Ascending aorta (tissue), 2 donors: ENCODE measurements at regions of chr5 and their contacts with region 1.

Region 1: GRCh38 chr5:80255732-80256479 is at the start of gene SERINC5:
- DNase-seq: peak; percentile 41 to 92
- H3K4me3 ChIP-seq: peak within 1 kb of the TSS; percentile 77 to 84
- H3K27ac ChIP-seq: peak within 1 kb of the TSS; percentile 93 to 96
- H3K4me1 ChIP-seq: peaks cover 0 to 5% of the 10 kb centered on the region in 2 donors
- H3K27me3 ChIP-seq: no peaks in the 10 kb centered on the region
- CTCF ChIP-seq: no peak
- total RNA-seq, gene SERINC5: 3.4 TPM

Region 2: DNA sequence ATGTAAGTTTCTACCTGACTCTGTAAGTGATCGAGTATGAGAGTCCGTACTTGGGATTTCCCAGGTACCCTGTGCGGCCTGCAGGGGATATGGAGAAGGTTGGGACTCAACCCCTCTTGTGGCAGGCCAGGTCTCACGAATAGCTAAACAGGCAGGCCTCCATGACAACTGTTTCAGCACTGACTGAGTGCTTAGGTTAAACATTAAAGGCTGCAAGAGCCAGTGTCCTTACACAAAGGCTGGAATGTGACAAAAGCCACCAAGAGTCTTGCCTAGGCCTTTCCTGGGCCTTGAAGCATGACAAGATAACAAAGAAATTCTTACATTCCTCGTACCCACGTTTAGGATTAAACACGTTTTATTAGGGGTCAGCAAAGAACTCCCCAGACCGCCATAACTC is 162.1 kb before region 1 on chr5:
- intact Hi-C with region 1: loop called (anchors 5 kb)
- DNase-seq: no peak
- H3K4me3 ChIP-seq: no peak overlapping the region
- H3K27ac ChIP-seq: no peak overlapping the region
- H3K4me1 ChIP-seq: no peaks in the 10 kb centered on the region
- H3K27me3 ChIP-seq: no peaks in the 10 kb centered on the region
- CTCF ChIP-seq: no peak

Region 3: GRCh38 chr5:80191991-80192398 is 63.9 kb before region 1 on chr5:
- intact Hi-C with region 1: loop called (anchors 5 kb)
- DNase-seq: no peak
- H3K4me3 ChIP-seq: no peak overlapping the region
- H3K27ac ChIP-seq: peak overlapping the region; percentile 4 to 54
- H3K4me1 ChIP-seq: peaks cover 0 to 18% of the 10 kb centered on the region in 2 donors
- H3K27me3 ChIP-seq: no peaks in the 10 kb centered on the region
- CTCF ChIP-seq: no peak

Region 4: GRCh38 chr5:80216753-80217596 is 38.9 kb before region 1 on chr5:
- intact Hi-C with region 1: loop called (anchors 2 kb)
- DNase-seq: peak; percentile 55 to 92
- H3K4me3 ChIP-seq: peak overlapping the region in 1 of 2 donors; percentile 34
- H3K27ac ChIP-seq: peak overlapping the region; percentile 44 to 62
- H3K4me1 ChIP-seq: peaks cover 0 to 11% of the 10 kb centered on the region in 2 donors
- H3K27me3 ChIP-seq: no peaks in the 10 kb centered on the region
- CTCF ChIP-seq: no peak

Region 5: DNA sequence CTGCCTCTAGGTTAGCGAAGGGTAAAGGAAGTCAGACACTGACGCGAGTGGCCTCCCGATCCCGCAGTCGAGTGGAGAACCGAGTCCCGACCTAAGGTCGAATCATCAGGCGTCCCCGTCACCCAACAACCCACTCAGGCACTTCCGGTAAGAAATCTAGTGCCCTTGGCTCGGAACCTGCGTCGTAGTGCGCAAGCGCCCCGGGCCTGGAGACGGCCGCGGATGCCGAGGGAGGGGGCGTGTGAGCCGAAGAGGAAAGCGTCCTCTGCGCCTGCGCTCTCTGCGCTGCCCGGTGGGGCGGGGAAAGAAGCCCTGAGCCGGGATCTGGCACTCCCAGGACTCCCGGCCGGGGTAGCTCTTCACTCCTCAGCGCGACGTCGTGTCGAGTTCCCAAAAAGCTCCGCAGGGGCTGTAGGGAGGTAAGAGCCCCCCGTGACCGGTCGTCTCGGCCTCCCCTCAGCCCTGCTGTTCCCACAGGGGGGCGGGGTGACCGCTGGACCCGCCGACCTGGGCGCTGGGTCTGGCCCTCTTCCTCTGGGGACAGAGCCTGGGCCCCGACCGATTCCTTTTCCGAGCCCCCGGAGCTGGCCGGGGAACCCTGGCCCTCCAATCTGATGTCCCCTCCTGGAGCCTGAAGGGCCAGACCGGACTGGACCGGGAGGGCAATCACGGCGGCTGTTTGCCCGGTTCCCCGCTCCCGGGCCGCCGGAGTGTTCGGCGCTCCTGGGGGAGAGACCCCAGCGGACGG is 152.0 kb after region 1 on chr5 and contains the start of gene ZFYVE16:
- intact Hi-C with region 1: loop called (anchors 2 kb)
- DNase-seq: peak; percentile 91 to 99
- H3K4me3 ChIP-seq: peak within 1 kb of the TSS; percentile 71 to 78
- H3K27ac ChIP-seq: peak within 1 kb of the TSS; percentile 89 to 95
- H3K4me1 ChIP-seq: peaks cover 3 to 15% of the 10 kb centered on the region in 2 donors
- H3K27me3 ChIP-seq: no peaks in the 10 kb centered on the region
- CTCF ChIP-seq: peak; percentile 39 to 57 (median 46)
- total RNA-seq, gene ZFYVE16: 10.0 TPM